A673 (cell line): ENCODE measurements at regions of chr4 and their contacts with region 1.

Region 1: GRCh38 chr4:26719954-26720552 is 136.2 kb downstream of the TBC1D19 start:
- DNase-seq: peak; percentile 60
- H3K4me3 ChIP-seq: no peak overlapping the region
- H3K27ac ChIP-seq: no peak overlapping the region
- H3K4me1 ChIP-seq: no peaks in the 10 kb centered on the region
- H3K27me3 ChIP-seq: no peaks in the 10 kb centered on the region
- CTCF ChIP-seq: peak; percentile 75

Region 2: DNA sequence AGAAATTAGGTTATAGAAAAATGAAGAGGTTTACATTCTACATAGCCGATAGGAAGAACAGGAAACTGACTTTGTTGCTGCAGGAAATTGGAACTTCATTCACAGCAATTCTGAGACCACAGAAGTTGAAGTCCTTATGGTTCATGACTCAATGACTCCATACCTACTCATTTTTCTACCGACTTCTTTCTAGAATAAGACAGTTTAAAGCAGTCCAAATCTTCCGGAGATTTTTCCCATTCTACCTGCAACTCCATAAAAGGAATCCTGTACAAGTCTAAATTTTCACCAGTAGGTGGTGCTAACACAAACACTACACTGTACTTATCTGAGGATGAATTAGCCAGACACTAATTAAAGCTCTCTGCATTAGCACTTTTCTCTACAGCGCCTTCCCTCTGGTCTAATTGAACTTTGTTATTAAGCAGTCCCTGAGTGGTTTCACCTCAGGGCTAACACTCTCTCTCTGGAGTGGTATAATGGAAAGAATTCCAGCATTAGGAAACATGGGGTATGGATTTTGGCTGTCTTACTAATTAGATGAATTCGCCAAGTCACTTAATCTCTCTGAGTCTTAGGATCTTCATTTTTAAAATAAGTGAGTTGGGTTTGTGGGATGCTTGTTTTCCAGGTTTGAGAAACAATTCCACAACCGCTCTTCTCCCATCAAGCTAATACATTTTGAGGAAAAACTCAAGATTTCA is 638.1 kb before region 1 on chr4:
- CTCF ChIA-PET with region 1: no interaction called
- POLR2A ChIA-PET with region 1: no interaction called
- intact Hi-C with region 1: loop called (anchors 10 kb)
- DNase-seq: peak; percentile 59
- H3K4me3 ChIP-seq: no peak overlapping the region
- H3K27ac ChIP-seq: no peak overlapping the region
- H3K4me1 ChIP-seq: no peaks in the 10 kb centered on the region
- H3K27me3 ChIP-seq: peaks cover 44% of the 10 kb centered on the region
- CTCF ChIP-seq: peak; percentile 84

Region 3: DNA sequence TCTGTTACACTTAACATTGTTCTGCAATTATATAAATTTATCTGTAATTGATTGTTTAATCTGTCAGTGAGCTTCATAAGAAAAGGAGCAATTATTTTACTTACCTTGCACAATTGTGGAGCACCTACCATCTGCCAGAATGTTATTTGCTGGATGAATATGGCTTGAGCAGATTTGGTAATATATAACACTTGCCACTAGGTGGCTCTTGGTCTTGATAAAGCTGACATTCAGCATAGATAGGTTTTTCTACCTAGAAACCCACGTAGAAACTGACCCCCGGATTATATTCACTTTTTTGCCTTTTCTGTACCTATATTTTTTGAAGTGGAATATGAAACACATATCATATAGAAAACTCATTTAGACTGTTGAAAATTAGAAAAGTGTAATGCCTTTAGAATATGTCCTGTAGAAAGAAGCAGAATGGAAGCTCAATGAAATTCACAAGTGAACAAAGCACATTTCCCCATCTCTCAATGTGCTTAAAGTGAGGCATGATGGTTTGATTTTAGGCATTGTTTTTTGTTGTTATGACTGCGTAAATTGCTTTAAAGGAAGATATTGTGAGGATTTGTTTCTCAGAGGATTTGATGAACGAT is 389.8 kb before region 1 on chr4:
- CTCF ChIA-PET with region 1: no interaction called
- POLR2A ChIA-PET with region 1: no interaction called
- intact Hi-C with region 1: loop called (anchors 5 kb)
- DNase-seq: peak; percentile 68
- H3K4me3 ChIP-seq: no peak overlapping the region
- H3K27ac ChIP-seq: no peak overlapping the region
- H3K4me1 ChIP-seq: peaks cover 3% of the 10 kb centered on the region
- H3K27me3 ChIP-seq: no peaks in the 10 kb centered on the region
- CTCF ChIP-seq: peak; percentile 82

Region 4: GRCh38 chr4:26459054-26459755 is 260.8 kb before region 1 on chr4:
- CTCF ChIA-PET with region 1: interaction called, 6 read pairs
- POLR2A ChIA-PET with region 1: no interaction called
- intact Hi-C with region 1: loop called (anchors 1 kb)
- DNase-seq: peak; percentile 77
- H3K4me3 ChIP-seq: no peak overlapping the region
- H3K27ac ChIP-seq: no peak overlapping the region
- H3K4me1 ChIP-seq: no peaks in the 10 kb centered on the region
- H3K27me3 ChIP-seq: no peaks in the 10 kb centered on the region
- CTCF ChIP-seq: peak; percentile 72

Region 5: DNA sequence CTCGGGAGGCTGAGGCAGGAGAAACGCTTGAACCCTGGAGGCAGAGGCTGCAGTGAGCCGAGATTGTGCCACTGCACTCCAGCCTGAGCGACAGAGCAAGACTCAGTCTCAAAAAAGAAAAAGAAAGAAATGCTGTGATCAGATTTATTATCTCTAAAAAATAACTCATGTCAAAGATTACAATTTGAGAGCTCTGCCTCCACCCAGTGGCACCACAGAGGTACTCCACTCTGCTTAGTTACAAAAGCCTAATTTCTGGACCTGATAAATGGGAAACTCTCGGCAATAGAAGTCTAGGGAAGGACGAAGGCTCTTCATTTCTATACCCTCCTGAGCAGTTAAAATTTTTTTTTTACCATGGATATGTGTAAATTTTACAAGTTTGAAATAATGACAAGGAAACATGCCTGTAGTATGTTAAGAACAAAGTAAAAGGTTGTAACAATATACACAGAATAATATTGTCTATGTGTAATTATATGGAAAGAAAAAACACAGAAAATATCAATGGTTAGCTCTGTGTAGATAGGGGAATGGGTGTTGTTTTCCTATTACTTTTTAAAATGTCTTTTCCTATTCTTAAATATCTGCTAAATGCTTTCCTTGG is 290.4 kb after region 1 on chr4:
- CTCF ChIA-PET with region 1: no interaction called
- POLR2A ChIA-PET with region 1: no interaction called
- intact Hi-C with region 1: loop called (anchors 5 kb)
- DNase-seq: peak; percentile 84
- H3K4me3 ChIP-seq: no peak overlapping the region
- H3K27ac ChIP-seq: no peak overlapping the region
- H3K4me1 ChIP-seq: peaks cover 36% of the 10 kb centered on the region
- H3K27me3 ChIP-seq: no peaks in the 10 kb centered on the region
- CTCF ChIP-seq: peak; percentile 89